ENCODE measurements at regions of chr1 and their contacts with region 1.

Region 1: DNA sequence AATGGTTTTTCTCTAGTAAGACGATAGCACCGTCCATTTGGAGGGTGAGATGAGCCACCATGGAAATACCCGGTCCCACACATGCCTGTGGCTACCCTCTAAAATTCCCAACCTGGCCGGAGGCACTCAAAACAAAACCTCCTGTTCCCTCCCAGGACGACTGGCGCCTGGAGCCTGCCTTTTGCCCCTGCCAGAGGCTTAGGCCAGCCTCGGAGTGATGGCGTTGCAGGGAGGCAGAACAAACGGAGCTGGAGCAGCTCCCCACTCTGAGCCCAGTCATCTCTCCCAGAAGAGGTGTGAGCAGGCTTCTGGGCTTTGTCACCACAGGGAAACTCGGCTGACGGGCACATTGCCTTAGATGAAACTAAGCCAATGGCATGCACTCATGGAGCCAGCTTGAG is 213.7 kb upstream of the HOOK1 start:
- DNase-seq: no peak
- ATAC-seq: no peak
- H3K4me3 ChIP-seq: no peak overlapping the region
- H3K27ac ChIP-seq: no peak overlapping the region
- H3K4me1 ChIP-seq: no peaks in the 10 kb centered on the region; the same call in 1 of the 2 replicates
- H3K27me3 ChIP-seq: no peaks in the 10 kb centered on the region
- CTCF ChIP-seq: no peak

Region 2: DNA sequence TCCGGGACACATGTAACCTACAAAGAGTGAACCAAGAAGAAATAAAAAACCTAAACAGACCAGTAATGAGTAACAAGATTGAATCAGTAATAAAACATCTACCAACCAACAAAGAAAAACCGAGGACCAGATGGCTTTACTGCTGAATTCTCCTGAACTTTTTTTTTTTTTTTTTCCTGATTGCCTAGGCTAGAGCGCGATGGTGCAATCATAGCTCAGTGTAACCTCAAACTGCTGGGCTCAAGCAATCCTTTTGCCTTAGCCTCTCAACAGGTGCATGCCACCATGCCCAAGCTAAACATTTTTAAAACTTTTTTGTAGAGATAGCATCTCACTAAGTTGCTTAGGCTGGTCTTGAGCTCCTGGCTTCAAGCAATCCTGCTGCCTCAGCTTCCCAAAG is 315.4 kb before region 1 on chr1:
- CTCF ChIA-PET with region 1: no interaction called
- POLR2A ChIA-PET with region 1: no interaction called
- in situ Hi-C with region 1: no loop called
- intact Hi-C with region 1: no loop called
- DNase-seq: no peak
- ATAC-seq: no peak
- H3K4me3 ChIP-seq: no peak overlapping the region
- H3K27ac ChIP-seq: no peak overlapping the region
- H3K4me1 ChIP-seq: no peaks in the 10 kb centered on the region
- H3K27me3 ChIP-seq: no peaks in the 10 kb centered on the region
- CTCF ChIP-seq: no peak

Region 3: DNA sequence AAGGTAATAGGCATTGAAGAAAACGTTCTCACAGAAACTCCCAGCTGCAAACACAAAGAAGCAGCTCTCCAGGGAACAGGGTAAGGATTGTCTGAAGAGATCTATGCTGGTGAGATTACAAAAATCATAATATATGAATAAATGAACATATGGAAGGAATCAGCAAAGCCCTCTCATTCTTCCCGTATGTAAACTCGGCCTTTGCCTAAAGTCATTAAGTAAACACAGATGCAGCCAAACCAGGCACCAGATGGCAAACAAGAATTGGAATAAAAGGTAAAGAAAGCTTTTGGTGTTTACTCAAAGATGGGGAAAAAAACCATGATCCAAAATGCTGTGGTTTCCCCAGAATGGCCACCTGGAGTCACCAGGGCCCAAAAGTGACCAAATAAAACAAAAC is 137.1 kb after region 1 on chr1:
- CTCF ChIA-PET with region 1: no interaction called
- POLR2A ChIA-PET with region 1: no interaction called
- in situ Hi-C with region 1: no loop called
- intact Hi-C with region 1: loop called (anchors 5 kb)
- DNase-seq: no peak
- ATAC-seq: no peak
- H3K4me3 ChIP-seq: no peak overlapping the region
- H3K27ac ChIP-seq: no peak overlapping the region
- H3K4me1 ChIP-seq: no peaks in the 10 kb centered on the region
- H3K27me3 ChIP-seq: no peaks in the 10 kb centered on the region
- CTCF ChIP-seq: no peak